Mammary epithelial cell (primary cell): ENCODE measurements at regions of chr6 and their contacts with region 1.

Region 1: GRCh38 chr6:31128093-31128676 is 7.9 kb upstream of the CDSN start:
- DNase-seq: peak; percentile 46
- H3K4me3 ChIP-seq: no peak overlapping the region
- H3K27ac ChIP-seq: no peak overlapping the region
- H3K4me1 ChIP-seq: peaks cover 38% of the 10 kb centered on the region
- H3K27me3 ChIP-seq: no peaks in the 10 kb centered on the region
- CTCF ChIP-seq: peak; percentile 82 to 90

Region 2: GRCh38 chr6:30571075-30571768 is 557.0 kb before region 1 on chr6 and contains the start of gene ABCF1:
- CTCF ChIA-PET with region 1: no interaction called
- dilution Hi-C with region 1: no loop called
- in situ Hi-C with region 1: no loop called
- intact Hi-C with region 1: no loop called
- DNase-seq: peak; percentile 97
- H3K4me3 ChIP-seq: peak within 1 kb of the TSS; percentile 70 to 99 (median 81)
- H3K27ac ChIP-seq: peak within 1 kb of the TSS; percentile 85
- H3K4me1 ChIP-seq: peaks cover 17% of the 10 kb centered on the region
- H3K27me3 ChIP-seq: no peaks in the 10 kb centered on the region
- CTCF ChIP-seq: no peak
- total RNA-seq, gene ABCF1: 31.8 to 59.8 TPM

Region 3: DNA sequence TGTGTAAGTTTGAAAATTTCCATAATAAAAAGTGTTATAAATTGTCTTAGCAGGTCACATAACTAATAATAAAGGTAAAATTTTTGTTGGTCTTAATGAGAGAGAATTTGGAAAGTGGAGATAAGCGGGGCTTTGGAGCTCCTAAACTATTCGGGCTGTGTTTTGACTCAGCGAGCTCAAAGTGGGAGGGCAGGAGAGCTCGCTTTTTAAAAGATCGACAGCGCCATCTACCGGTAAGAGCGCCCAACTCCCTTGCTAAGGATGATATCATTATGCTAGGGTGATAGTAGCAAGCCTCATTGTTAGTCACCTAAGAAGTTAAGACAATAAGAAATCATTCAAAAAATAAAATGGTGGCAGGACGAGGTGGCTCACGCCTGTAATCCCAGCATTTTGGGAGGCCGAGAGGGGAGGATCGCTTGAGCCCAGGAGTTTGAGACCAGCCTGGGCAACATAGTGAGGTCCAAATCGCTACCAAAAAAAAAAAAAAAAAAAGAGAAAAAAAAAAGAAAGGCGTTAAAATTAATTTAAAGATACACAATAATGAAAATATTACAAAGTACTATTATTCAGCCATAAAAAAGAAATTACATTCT is 40.6 kb before region 1 on chr6:
- CTCF ChIA-PET with region 1: interaction called, 4 read pairs
- dilution Hi-C with region 1: no loop called
- in situ Hi-C with region 1: no loop called
- intact Hi-C with region 1: loop called (anchors 1 kb)
- DNase-seq: peak; percentile 73
- H3K4me3 ChIP-seq: no peak overlapping the region
- H3K27ac ChIP-seq: no peak overlapping the region
- H3K4me1 ChIP-seq: peaks cover 8% of the 10 kb centered on the region
- H3K27me3 ChIP-seq: no peaks in the 10 kb centered on the region
- CTCF ChIP-seq: peak; percentile 74